ENCODE measurements at regions of chr10 and their contacts with region 1.

Region 1: GRCh38 chr10:15168781-15169554 is 475 bp upstream of the NMT2 start:
- DNase-seq: peak; percentile 96 to 98 (median 98)
- ATAC-seq: peak; percentile 88 to 96 (median 92)
- H3K4me3 ChIP-seq: peak overlapping the region in 9 of 12 donors; percentile 11 to 64 (median 32)
- H3K27ac ChIP-seq: peak overlapping the region in 11 of 12 donors; percentile 4 to 82 (median 66)
- H3K4me1 ChIP-seq: peaks cover 3 to 38% (median 25%) of the 10 kb centered on the region in 12 donors
- H3K27me3 ChIP-seq: no peaks in the 10 kb centered on the region
- CTCF ChIP-seq: no peak
- POLR2A ChIP-seq: peak in 1 of 2 donors; percentile 73

Region 2: DNA sequence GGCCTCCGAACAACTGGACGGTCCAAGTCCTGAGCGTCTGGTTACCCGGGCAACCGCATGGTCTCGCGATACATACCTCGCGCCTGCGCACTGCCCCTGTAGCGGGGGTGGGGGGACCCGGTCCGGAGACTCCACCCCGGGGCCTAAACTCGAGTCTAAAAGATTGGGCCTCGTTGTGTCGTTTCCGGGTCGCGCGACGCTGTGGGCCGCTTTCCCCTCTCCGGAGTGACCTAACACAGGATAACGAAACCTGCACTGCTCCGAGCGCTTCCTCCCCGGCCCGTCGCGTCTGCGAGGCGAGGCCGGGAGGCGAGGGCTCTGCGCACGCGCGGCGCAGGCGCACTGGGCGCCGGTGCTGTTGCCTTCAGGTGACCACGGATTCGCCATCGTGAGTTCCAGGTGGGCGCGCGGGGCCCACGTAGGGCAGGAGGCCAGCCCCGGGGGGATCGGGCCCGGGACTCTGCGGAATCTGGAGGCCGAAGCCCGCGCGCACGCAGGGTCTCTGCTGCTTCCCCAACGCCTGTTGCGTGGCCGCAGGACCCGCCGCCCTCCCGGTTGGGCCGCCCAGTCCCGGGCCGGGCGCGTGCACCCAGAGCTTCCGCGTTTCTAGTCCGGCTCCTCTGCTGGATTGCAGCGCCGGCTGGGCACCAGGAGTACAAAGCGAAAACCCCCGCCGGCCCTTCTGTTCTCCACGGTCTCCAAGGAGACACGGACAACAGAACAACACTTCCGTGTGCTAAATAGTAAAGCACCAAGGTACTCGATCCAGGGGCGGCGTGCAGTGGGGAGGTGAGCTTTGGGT is 71.8 kb before region 1 on chr10 and contains the start of gene RPP38:
- intact Hi-C with region 1: loop called in 2 of 10 experiments (anchors 2 to 5 kb)
- DNase-seq: peak; percentile 95 to 99 (median 97)
- ATAC-seq: peak; percentile 97 to 99 (median 98)
- H3K4me3 ChIP-seq: peak within 1 kb of the TSS; percentile 63 to 97 (median 88)
- H3K27ac ChIP-seq: peak within 1 kb of the TSS; percentile 85 to 100 (median 95)
- H3K4me1 ChIP-seq: peaks cover 2 to 31% (median 19%) of the 10 kb centered on the region in 12 donors
- H3K27me3 ChIP-seq: peaks cover 0 to 3% (median 0%) of the 10 kb centered on the region in 9 donors
- CTCF ChIP-seq: peak in 1 of 12 donors; percentile 3
- POLR2A ChIP-seq: peak in 1 of 2 donors; percentile 78
- total RNA-seq, gene RPP38: 7.2 to 14.4 (median 8.9) TPM

Region 3: GRCh38 chr10:15200626-15201025 is 31.7 kb after region 1 on chr10:
- intact Hi-C with region 1: loop called in 1 of 10 experiments (anchors 5 kb)
- DNase-seq: no peak
- ATAC-seq: peak; percentile 25 to 75 (median 56)
- H3K4me3 ChIP-seq: no peak overlapping the region
- H3K27ac ChIP-seq: peak overlapping the region in 4 of 12 donors; percentile 4 to 57 (median 17)
- H3K4me1 ChIP-seq: peaks cover 0 to 51% (median 11%) of the 10 kb centered on the region in 12 donors
- H3K27me3 ChIP-seq: no peaks in the 10 kb centered on the region
- CTCF ChIP-seq: no peak
- POLR2A ChIP-seq: no peak

Measured in heart left ventricle (tissue), 16 donors.